ENCODE measurements at regions of chr10 and their contacts with region 1.

Region 1: DNA sequence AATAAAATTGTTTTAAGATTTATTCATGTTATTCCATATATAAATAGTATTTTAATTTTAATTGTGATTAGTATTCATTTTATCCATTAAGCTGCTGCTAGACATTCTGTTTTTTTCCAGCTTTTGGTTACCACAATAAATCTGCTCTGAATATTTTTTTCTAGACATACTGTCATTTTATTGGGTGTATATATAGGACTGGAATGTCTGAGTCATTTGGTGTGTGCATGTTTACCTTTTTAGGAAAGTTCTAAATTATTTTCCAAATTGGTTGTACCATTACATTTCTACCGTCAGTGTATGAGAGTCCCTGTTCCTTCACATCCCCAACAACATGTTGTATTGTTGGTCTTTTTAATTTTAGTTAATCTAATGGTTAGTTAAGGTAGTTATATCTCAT is 1138.1 kb downstream of the REEP3 start:
- DNase-seq: no peak
- ATAC-seq: no peak
- H3K4me3 ChIP-seq: no peak overlapping the region
- H3K27ac ChIP-seq: no peak overlapping the region
- H3K4me1 ChIP-seq: no peaks in the 10 kb centered on the region
- H3K27me3 ChIP-seq: no peaks in the 10 kb centered on the region
- CTCF ChIP-seq: no peak

Region 2: DNA sequence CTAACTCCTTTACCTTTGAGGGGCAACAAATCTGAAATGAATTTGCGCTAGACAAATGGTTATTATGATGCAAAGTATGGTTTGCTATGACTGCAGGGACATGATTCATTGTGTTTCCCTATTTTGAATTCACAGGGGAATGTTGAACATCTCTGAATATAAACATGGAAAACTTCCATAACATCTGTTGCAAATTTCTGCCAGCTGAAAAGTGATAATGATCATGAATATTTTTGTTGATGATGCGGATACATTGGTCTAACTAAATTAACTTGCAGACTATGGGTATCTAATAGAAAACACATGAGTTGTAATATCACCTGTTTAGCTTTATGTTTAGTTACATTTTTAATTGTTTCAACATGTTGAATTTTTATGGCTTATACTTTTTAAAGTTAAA is 187.4 kb after region 1 on chr10:
- CTCF ChIA-PET with region 1: no interaction called
- POLR2A ChIA-PET with region 1: no interaction called
- in situ Hi-C with region 1: no loop called
- intact Hi-C with region 1: no loop called
- DNase-seq: no peak
- ATAC-seq: no peak
- H3K4me3 ChIP-seq: no peak overlapping the region
- H3K27ac ChIP-seq: no peak overlapping the region
- H3K4me1 ChIP-seq: no peaks in the 10 kb centered on the region
- H3K27me3 ChIP-seq: no peaks in the 10 kb centered on the region
- CTCF ChIP-seq: no peak

Region 3: DNA sequence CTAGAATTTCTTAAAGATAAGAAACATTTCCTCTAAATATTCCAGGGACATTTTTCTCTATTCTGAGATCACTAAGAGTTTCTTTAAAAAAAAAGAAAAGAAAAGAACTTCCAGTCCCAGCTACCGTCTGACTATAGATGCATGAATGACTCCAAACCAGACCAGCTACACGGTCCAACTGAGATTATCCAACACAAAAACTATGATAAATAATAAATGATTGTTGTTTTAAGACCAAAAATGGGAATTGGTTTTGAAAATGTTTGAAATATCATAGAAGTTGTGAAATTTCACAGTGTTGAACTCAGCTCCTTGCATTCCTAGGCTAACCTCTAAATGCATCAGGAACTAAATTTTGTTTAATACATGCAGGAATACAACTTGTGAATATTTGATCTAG is 646.9 kb after region 1 on chr10:
- CTCF ChIA-PET with region 1: no interaction called
- POLR2A ChIA-PET with region 1: interaction called, 11 read pairs
- in situ Hi-C with region 1: no loop called
- intact Hi-C with region 1: no loop called
- DNase-seq: no peak
- ATAC-seq: no peak
- H3K4me3 ChIP-seq: no peak overlapping the region
- H3K27ac ChIP-seq: no peak overlapping the region
- H3K4me1 ChIP-seq: no peaks in the 10 kb centered on the region
- H3K27me3 ChIP-seq: no peaks in the 10 kb centered on the region
- CTCF ChIP-seq: no peak